H1 (cell line): ENCODE measurements at regions of chr2 and their contacts with region 1.

Region 1: GRCh38 chr2:231674587-231675338 is 33.6 kb upstream of the PTMA start:
- DNase-seq: peak; percentile 78 to 96
- H3K4me3 ChIP-seq: no peak overlapping the region
- H3K27ac ChIP-seq: 0 out of 2 replicates have a peak overlapping the region, but pooled peaks have one; percentile 20
- H3K4me1 ChIP-seq: peaks cover 0 to 39% (median 30%) of the 10 kb centered on the region in 4 experiments; a peak in 6 of 7 replicates
- H3K27me3 ChIP-seq: no peaks in the 10 kb centered on the region
- CTCF ChIP-seq: peak in 2 of 3 experiments; percentile 91 to 94; a peak in 3 of 4 replicates
- EP300 ChIP-seq: peak in 1 of 2 experiments; percentile 23; a peak in 1 of 3 replicates
- POLR2A ChIP-seq: no peak
- RAD21 ChIP-seq: peak; percentile 80 to 89

Region 2: GRCh38 chr2:231334179-231334930 is 340.4 kb before region 1 on chr2:
- CTCF ChIA-PET with region 1: no interaction called
- POLR2A ChIA-PET with region 1: no interaction called
- DNase-seq: no peak
- H3K4me3 ChIP-seq: no peak overlapping the region
- H3K27ac ChIP-seq: no peak overlapping the region
- H3K4me1 ChIP-seq: peaks cover 0 to 3% (median 1%) of the 10 kb centered on the region in 4 experiments; a peak in 2 of 7 replicates
- H3K27me3 ChIP-seq: no peaks in the 10 kb centered on the region
- CTCF ChIP-seq: no peak
- EP300 ChIP-seq: no peak
- POLR2A ChIP-seq: no peak
- RAD21 ChIP-seq: no peak

Region 3: GRCh38 chr2:231563378-231563961 is 111.3 kb before region 1 on chr2:
- CTCF ChIA-PET with region 1: interaction called, 66 read pairs
- POLR2A ChIA-PET with region 1: interaction called, 6 read pairs
- DNase-seq: peak; percentile 73 to 78
- H3K4me3 ChIP-seq: no peak overlapping the region
- H3K27ac ChIP-seq: no peak overlapping the region
- H3K4me1 ChIP-seq: peaks cover 0 to 5% (median 3%) of the 10 kb centered on the region in 4 experiments; a peak in 5 of 7 replicates
- H3K27me3 ChIP-seq: no peaks in the 10 kb centered on the region
- CTCF ChIP-seq: peak; percentile 90 to 95 (median 93)
- EP300 ChIP-seq: no peak
- POLR2A ChIP-seq: no peak
- RAD21 ChIP-seq: peak; percentile 92

Region 4: GRCh38 chr2:231621129-231621879 is 53.5 kb before region 1 on chr2:
- CTCF ChIA-PET with region 1: interaction called, 179 read pairs
- POLR2A ChIA-PET with region 1: interaction called, 223 read pairs
- DNase-seq: peak in 1 of 2 experiments; percentile 77
- H3K4me3 ChIP-seq: peak overlapping the region in 1 of 4 experiments; percentile 30; a peak in 1 of 8 replicates
- H3K27ac ChIP-seq: peak overlapping the region; percentile 87
- H3K4me1 ChIP-seq: peaks cover 9 to 14% (median 12%) of the 10 kb centered on the region in 4 experiments
- H3K27me3 ChIP-seq: no peaks in the 10 kb centered on the region
- CTCF ChIP-seq: no peak
- EP300 ChIP-seq: no peak
- POLR2A ChIP-seq: no peak
- RAD21 ChIP-seq: no peak

Region 5: DNA sequence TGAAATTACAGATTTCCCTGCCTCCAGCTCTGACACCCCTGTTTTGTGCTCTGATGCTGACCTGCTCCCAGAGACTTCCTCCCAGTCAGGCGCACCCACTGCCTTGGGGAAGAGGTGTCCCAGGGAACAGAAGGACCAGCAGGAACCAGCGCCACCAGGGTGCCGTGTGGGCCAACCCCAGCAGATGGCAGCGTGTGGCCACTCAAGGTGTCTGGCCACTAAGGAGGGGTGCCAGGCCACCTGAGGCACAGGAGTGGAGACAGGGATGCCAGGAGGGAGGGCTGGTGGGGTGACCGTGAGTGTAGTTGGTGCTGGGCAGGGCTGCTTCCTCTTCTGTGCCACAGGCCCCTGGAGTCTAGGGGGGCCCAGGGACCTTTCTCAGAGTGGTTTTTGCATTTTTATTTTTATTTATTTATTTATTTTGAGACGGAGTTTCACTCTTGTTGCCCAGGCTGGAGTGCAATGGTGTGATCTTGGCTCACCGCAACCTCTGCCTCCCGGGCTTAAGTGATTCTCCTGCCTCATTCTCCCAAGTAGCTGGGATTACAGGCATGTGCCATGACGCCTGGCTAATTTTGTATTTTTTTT is 26.1 kb before region 1 on chr2:
- CTCF ChIA-PET with region 1: interaction called, 163 read pairs
- POLR2A ChIA-PET with region 1: interaction called, 28 read pairs
- DNase-seq: peak in 1 of 2 experiments; percentile 88
- H3K4me3 ChIP-seq: no peak overlapping the region
- H3K27ac ChIP-seq: no peak overlapping the region
- H3K4me1 ChIP-seq: peaks cover 2 to 7% (median 3%) of the 10 kb centered on the region in 4 experiments; a peak in 4 of 7 replicates
- H3K27me3 ChIP-seq: no peaks in the 10 kb centered on the region
- CTCF ChIP-seq: peak; percentile 88 to 95 (median 90)
- EP300 ChIP-seq: no peak
- POLR2A ChIP-seq: no peak
- RAD21 ChIP-seq: peak; percentile 87 to 92

Region 6: GRCh38 chr2:231687133-231687852 is 12.5 kb after region 1 on chr2:
- CTCF ChIA-PET with region 1: interaction called, 247 read pairs
- POLR2A ChIA-PET with region 1: interaction called, 231 read pairs
- DNase-seq: peak; percentile 75 to 93
- H3K4me3 ChIP-seq: peak overlapping the region; percentile 16 to 54 (median 32); a peak in 7 of 8 replicates
- H3K27ac ChIP-seq: peak overlapping the region; percentile 46
- H3K4me1 ChIP-seq: peaks cover 4 to 42% (median 21%) of the 10 kb centered on the region in 4 experiments
- H3K27me3 ChIP-seq: no peaks in the 10 kb centered on the region
- CTCF ChIP-seq: peak in 2 of 3 experiments; percentile 79 to 92; a peak in 3 of 4 replicates
- EP300 ChIP-seq: no peak
- POLR2A ChIP-seq: peak in 1 of 2 experiments; percentile 79; a peak in 2 of 3 replicates
- RAD21 ChIP-seq: peak; percentile 61 to 67

Region 7: GRCh38 chr2:231713730-231714430 is 39.1 kb after region 1 on chr2:
- CTCF ChIA-PET with region 1: interaction called, 555 read pairs
- POLR2A ChIA-PET with region 1: interaction called, 1,080 read pairs
- DNase-seq: peak; percentile 76 to 97
- H3K4me3 ChIP-seq: no peak overlapping the region
- H3K27ac ChIP-seq: peak overlapping the region; percentile 69; the same call in 1 of the 2 replicates
- H3K4me1 ChIP-seq: peaks cover 0 to 28% (median 19%) of the 10 kb centered on the region in 4 experiments; a peak in 6 of 7 replicates
- H3K27me3 ChIP-seq: no peaks in the 10 kb centered on the region
- CTCF ChIP-seq: peak in 2 of 3 experiments; percentile 90 to 91; a peak in 3 of 4 replicates
- EP300 ChIP-seq: no peak; a peak in 1 of 3 replicates
- POLR2A ChIP-seq: peak in 1 of 2 experiments; percentile 99; a peak in 2 of 3 replicates
- RAD21 ChIP-seq: peak; percentile 43 to 59